Naive thymus-derived CD4-positive, alpha-beta T cell (primary cell): ENCODE measurements at regions of chr18 and their contacts with region 1.

Region 1: DNA sequence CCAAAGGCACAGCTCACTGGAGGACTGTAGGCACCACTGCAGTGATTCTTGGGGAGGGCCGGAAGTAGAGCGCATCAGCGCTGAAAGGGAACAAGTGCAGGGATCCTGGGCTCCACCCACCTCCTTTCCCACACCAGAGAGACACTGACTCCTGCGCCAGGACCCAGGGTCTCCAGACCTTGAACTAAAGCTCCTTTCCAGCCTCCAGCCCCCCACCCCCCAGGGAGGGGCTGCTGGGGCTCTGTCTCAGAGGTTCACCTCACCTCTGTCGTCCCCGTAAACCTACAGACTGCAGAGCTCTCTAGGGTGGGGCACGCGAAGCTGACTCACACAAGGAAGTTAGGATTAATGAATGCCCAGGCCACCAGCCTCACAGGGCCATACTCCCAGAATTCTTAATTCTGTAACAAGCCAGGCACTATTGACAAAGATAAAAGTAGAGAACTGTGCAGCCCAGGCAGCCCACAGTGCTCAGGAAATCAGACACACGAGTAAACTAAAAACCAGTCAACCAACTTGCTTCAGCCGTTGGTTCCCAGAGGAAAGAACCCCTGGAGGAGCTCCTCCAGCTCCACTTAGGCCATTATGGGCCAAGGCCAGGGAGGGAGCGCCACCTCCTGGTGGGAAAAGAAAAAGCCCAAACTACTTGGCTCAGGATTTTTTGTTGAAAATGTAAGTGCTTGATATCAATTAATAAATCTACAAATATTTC is 45.1 kb upstream of the ACAA2 start:
- DNase-seq: peak; percentile 13 to 68 (median 33)
- ATAC-seq: no peak
- H3K4me3 ChIP-seq: no peak overlapping the region
- H3K4me3 Mint-ChIP-seq: no peak overlapping the region
- H3K27ac ChIP-seq: no peak overlapping the region
- H3K27ac Mint-ChIP-seq: peak overlapping the region in 2 of 9 donors; percentile 38 to 72
- H3K4me1 ChIP-seq: no peaks in the 10 kb centered on the region
- H3K4me1 Mint-ChIP-seq: peaks cover 0 to 6% (median 0%) of the 10 kb centered on the region in 7 donors
- H3K27me3 ChIP-seq: no peaks in the 10 kb centered on the region
- H3K27me3 Mint-ChIP-seq: peaks cover 0 to 3% (median 0%) of the 10 kb centered on the region in 5 donors

Region 2: DNA sequence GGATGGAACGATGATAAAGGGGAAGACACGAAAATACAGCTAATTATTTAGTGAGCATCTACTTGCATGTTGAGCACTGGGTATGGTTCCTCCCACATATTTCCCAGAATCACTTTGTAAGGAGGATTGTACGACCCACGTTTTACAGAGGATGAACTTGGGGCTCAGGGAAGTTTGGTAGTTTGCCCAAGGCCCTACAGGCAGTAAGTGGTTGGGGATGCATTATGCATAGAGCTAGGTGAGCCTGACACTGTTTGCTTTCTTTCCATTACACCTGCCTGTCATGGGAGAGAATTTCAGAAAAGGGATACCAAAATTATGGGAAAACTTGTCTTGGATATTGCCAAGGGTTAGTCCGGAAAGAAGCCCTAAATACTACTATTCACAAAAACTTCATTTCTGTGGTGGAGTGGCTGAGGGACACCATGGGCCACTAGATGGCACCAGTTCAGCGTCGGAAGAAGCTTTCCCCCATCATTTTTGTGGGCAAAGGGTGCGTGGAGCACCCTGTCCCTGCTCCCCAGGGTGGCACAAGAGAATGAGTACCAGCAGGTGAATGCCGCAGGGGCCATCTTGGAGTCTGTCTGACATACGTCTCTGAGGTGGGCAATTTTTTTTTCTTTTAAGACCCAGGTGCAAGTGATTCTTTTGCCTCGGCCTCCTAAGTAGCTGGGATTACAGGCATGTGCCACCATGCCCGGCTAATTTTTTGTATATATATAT is 347.9 kb before region 1 on chr18:
- CTCF ChIA-PET with region 1: interaction called, 52 read pairs
- POLR2A ChIA-PET with region 1: no interaction called
- intact Hi-C with region 1: loop called (anchors 1 kb)
- DNase-seq: peak in 7 of 9 donors; percentile 31 to 56 (median 46)
- ATAC-seq: peak; percentile 85
- H3K4me3 ChIP-seq: no peak overlapping the region
- H3K4me3 Mint-ChIP-seq: no peak overlapping the region
- H3K27ac ChIP-seq: no peak overlapping the region
- H3K27ac Mint-ChIP-seq: no peak overlapping the region
- H3K4me1 ChIP-seq: no peaks in the 10 kb centered on the region
- H3K4me1 Mint-ChIP-seq: no peaks in the 10 kb centered on the region
- H3K27me3 ChIP-seq: no peaks in the 10 kb centered on the region
- H3K27me3 Mint-ChIP-seq: peaks cover 8 to 22% (median 15%) of the 10 kb centered on the region in 5 donors

Region 3: DNA sequence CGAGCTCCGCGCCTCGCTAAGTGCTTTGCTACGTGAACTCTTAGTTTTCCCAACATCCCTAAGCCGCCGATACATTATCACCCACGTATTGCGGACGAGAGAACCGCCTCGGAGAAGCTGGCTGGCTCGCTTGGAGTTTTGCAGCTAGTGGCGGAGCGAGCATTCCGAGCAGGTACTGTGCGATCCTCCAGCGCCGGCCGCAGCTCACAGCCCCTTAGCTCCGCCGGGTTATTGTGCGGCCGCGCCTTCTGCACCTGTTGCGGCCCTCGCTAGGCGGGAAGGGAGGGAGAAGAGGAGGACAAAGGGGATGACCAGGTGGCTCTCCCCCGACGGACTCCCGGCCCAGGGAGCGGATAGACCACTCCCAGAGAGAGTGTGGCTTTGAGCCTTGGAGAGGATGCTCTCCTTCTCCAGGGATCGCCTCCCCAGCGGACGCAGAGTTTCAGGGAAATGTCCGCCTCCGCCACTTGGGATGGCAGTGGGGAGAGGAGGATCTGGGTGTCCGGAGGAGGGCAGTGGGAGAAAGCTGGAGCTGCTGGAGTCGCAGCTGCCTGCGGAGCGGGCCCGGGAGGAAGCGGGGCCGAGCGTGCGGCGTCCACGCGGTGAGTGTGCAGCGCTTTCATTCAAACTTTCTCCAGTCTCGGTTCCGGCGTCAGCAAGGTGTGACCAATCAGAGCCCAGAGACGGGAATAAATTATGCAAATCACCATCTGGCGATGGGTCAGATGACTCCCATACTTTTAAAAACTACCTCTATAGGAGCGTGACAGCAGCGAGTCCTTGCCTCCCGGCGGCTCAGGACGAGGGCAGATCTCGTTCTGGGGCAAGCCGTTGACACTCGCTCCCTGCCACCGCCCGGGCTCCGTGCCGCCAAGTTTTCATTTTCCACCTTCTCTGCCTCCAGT is 296.9 kb before region 1 on chr18 and contains the start of gene LIPG:
- CTCF ChIA-PET with region 1: interaction called, 7 read pairs
- POLR2A ChIA-PET with region 1: no interaction called
- intact Hi-C with region 1: loop called (anchors 1 kb)
- DNase-seq: peak in 6 of 9 donors; percentile 5 to 51 (median 14)
- ATAC-seq: peak; percentile 67
- H3K4me3 ChIP-seq: peak within 1 kb of the TSS; percentile 52
- H3K4me3 Mint-ChIP-seq: peak within 1 kb of the TSS; percentile 69 to 87 (median 80)
- H3K27ac ChIP-seq: no peak within 1 kb of the TSS
- H3K27ac Mint-ChIP-seq: peak within 1 kb of the TSS in 1 of 9 donors; percentile 57
- H3K4me1 ChIP-seq: peaks cover 7 to 15% of the 10 kb centered on the region in 2 donors
- H3K4me1 Mint-ChIP-seq: peaks cover 16 to 32% (median 30%) of the 10 kb centered on the region in 7 donors
- H3K27me3 ChIP-seq: peaks cover 14 to 16% of the 10 kb centered on the region in 2 donors
- H3K27me3 Mint-ChIP-seq: peaks cover 65 to 84% (median 73%) of the 10 kb centered on the region in 5 donors
- total RNA-seq, gene LIPG: not detected

Region 4: DNA sequence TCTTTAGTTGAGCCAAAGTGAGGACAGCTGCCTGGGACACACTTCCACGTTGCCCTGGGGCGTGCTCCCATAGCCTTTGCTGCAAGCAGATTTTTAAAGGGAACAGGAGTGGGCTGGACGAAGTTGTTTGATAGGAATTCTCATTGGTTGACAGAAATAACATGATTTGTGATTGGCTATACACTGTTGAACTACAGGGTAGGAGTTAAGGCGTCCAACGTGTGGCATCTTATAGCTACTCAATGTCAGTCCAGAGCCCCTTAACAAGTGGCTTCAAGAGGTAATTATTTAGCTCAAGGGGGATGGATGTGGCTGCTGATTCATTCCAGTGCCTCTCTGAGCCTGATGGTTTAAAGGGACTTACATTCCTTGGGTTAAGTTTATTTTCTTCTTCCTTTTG is 110.6 kb before region 1 on chr18:
- CTCF ChIA-PET with region 1: no interaction called
- POLR2A ChIA-PET with region 1: no interaction called
- intact Hi-C with region 1: loop called in 1 of 2 experiments (anchors 10 kb)
- DNase-seq: no peak
- ATAC-seq: no peak
- H3K4me3 ChIP-seq: no peak overlapping the region
- H3K4me3 Mint-ChIP-seq: no peak overlapping the region
- H3K27ac ChIP-seq: no peak overlapping the region
- H3K27ac Mint-ChIP-seq: no peak overlapping the region
- H3K4me1 ChIP-seq: peaks cover 7 to 9% of the 10 kb centered on the region in 2 donors
- H3K4me1 Mint-ChIP-seq: peaks cover 0 to 29% (median 15%) of the 10 kb centered on the region in 7 donors
- H3K27me3 ChIP-seq: no peaks in the 10 kb centered on the region
- H3K27me3 Mint-ChIP-seq: peaks cover 0 to 25% (median 7%) of the 10 kb centered on the region in 5 donors

Region 5: GRCh38 chr18:49784427-49785185 is 73.9 kb before region 1 on chr18:
- CTCF ChIA-PET with region 1: no interaction called
- POLR2A ChIA-PET with region 1: no interaction called
- intact Hi-C with region 1: loop called in 1 of 2 experiments (anchors 5 kb)
- DNase-seq: no peak
- ATAC-seq: no peak
- H3K4me3 ChIP-seq: no peak overlapping the region
- H3K4me3 Mint-ChIP-seq: peak overlapping the region in 5 of 10 donors; percentile 12 to 64 (median 30)
- H3K27ac ChIP-seq: no peak overlapping the region
- H3K27ac Mint-ChIP-seq: peak overlapping the region in 3 of 9 donors; percentile 29 to 48 (median 31)
- H3K4me1 ChIP-seq: peaks cover 12 to 46% of the 10 kb centered on the region in 2 donors
- H3K4me1 Mint-ChIP-seq: peaks cover 27 to 52% (median 42%) of the 10 kb centered on the region in 7 donors
- H3K27me3 ChIP-seq: no peaks in the 10 kb centered on the region
- H3K27me3 Mint-ChIP-seq: no peaks in the 10 kb centered on the region